Right ventricle myocardium inferior (tissue), 1 donor: ENCODE measurements at regions of chr9 and their contacts with region 1.

Region 1: DNA sequence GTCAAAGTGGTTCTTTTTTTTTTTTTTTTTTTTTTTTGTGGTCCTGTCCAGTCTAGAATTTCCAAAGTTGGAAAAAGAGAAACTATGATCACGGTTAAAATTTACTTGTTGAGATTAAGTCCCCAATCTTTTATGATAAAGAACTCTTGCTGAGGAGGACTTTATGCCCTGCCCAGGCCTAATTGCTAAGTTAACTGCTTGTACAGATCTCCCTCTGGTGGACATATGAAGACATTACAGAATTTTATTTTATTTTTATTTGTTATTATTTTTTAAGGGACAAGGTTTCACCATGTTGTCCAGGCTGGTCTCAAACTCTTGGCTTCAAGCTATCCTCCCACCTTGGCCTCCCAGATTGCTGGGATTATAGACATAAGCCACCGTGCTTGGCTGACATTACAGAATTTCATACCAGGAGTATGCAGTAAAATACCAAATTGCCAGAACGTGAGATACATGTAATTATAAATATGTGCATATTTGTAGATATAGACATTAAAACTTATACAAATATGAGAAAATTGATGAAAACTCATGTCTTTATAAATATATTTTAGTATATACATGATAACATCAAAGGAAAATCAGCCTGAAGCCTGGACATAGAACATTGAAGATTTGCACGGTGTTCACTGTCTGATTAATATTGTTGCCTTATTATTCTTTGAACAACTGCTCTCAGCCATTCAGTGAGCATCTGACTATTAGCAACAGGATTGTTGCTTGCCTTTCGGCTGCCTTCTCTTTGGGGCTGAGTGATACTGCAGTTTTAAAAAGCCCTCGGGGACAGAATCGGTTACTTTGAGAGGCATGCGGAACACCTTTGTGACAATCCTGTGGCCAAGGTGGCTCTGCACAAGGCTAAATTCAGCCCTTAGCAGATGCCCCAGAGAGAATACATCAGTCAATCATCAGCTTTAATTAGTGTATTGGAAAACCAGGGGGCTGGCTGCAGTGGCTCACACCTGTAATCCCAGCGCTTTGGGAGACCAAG is 91.0 kb downstream of the RFK start:
- DNase-seq: no peak
- ATAC-seq: no peak

Region 2: GRCh38 chr9:75200892-75201470 is 1102.3 kb before region 1 on chr9:
- intact Hi-C with region 1: loop called (anchors 2 kb)
- DNase-seq: no peak
- ATAC-seq: no peak

Region 3: GRCh38 chr9:75265525-75265972 is 1037.7 kb before region 1 on chr9:
- intact Hi-C with region 1: loop called (anchors 5 kb)
- DNase-seq: no peak
- ATAC-seq: no peak

Region 4: GRCh38 chr9:75866273-75866871 is 436.9 kb before region 1 on chr9:
- intact Hi-C with region 1: loop called (anchors 10 kb)
- DNase-seq: no peak
- ATAC-seq: no peak

Region 5: DNA sequence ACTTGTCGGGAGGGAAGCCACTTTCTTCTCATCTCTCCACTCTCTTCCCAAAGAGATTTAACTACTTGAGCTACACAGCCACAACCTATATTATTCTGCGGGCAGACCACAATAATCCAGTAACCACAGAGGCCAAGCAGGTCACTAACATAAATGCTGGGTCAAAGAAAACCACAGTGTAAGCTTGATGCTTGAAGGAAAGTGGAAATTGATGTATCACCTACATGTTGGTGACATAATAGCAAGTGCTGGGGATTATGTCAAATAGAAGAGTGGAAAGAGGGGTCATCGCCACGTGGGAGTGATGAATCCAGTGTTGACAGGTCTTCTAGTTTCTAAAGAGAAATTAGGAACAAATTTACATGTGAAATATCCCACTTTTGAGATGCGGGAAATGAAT is 50.0 kb after region 1 on chr9:
- intact Hi-C with region 1: no loop called
- DNase-seq: no peak
- ATAC-seq: no peak

Region 6: GRCh38 chr9:76419782-76420380 is 116.6 kb after region 1 on chr9:
- intact Hi-C with region 1: no loop called
- DNase-seq: no peak
- ATAC-seq: no peak